ENCODE measurements at regions of chr2 and their contacts with region 1.

Region 1: GRCh38 chr2:141660232-141660631 is 470.6 kb downstream of the LRP1B start:
- DNase-seq: no peak
- ATAC-seq: no peak
- H3K4me3 ChIP-seq: no peak overlapping the region
- H3K27ac ChIP-seq: no peak overlapping the region
- H3K4me1 ChIP-seq: no peaks in the 10 kb centered on the region
- H3K27me3 ChIP-seq: no peaks in the 10 kb centered on the region
- CTCF ChIP-seq: no peak

Region 2: GRCh38 chr2:140929849-140930248 is 730.4 kb before region 1 on chr2:
- CTCF ChIA-PET with region 1: no interaction called
- POLR2A ChIA-PET with region 1: interaction called, 11 read pairs
- in situ Hi-C with region 1: no loop called
- intact Hi-C with region 1: no loop called
- DNase-seq: no peak
- ATAC-seq: no peak
- H3K4me3 ChIP-seq: no peak overlapping the region
- H3K27ac ChIP-seq: no peak overlapping the region
- H3K4me1 ChIP-seq: no peaks in the 10 kb centered on the region
- H3K27me3 ChIP-seq: no peaks in the 10 kb centered on the region
- CTCF ChIP-seq: no peak

Region 3: DNA sequence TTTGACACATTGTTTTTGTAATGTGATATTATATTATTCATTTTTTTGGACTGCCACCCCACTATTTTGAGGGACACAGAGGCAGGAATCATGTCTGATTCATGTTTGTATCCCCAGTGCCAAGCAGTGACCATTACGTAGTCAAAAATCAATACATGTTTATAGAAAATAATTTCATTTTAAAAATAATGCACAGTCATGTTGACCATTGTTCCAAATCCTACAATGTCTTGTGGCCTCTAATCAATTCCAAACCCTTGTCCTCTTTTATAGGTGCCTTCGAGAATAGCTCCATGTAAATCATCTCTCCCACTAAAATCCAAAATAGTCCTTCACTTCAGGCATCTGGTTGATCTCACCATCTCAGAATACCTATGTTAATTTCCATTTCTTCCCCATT is 15.9 kb after region 1 on chr2:
- CTCF ChIA-PET with region 1: no interaction called
- POLR2A ChIA-PET with region 1: no interaction called
- in situ Hi-C with region 1: no loop called
- intact Hi-C with region 1: loop called (anchors 1 kb)
- DNase-seq: no peak
- ATAC-seq: no peak
- H3K4me3 ChIP-seq: no peak overlapping the region
- H3K27ac ChIP-seq: no peak overlapping the region
- H3K4me1 ChIP-seq: no peaks in the 10 kb centered on the region
- H3K27me3 ChIP-seq: no peaks in the 10 kb centered on the region
- CTCF ChIP-seq: no peak